ENCODE measurements at regions of chr7 and their contacts with region 1.

Region 1: GRCh38 chr7:43700059-43700501 is 29.2 kb downstream of the COA1 start:
- DNase-seq: peak; percentile 59
- H3K4me3 ChIP-seq: peak overlapping the region in 1 of 2 experiments; percentile 10; a peak in 1 of 4 replicates
- H3K27ac ChIP-seq: peak overlapping the region in 1 of 2 experiments; percentile 74; a peak in 2 of 4 replicates
- H3K4me1 ChIP-seq: peaks cover 12 to 40% of the 10 kb centered on the region in 2 experiments; a peak in 3 of 4 replicates
- H3K27me3 ChIP-seq: no peaks in the 10 kb centered on the region
- CTCF ChIP-seq: peak; percentile 94
- EP300 ChIP-seq: no peak
- RAD21 ChIP-seq: peak; percentile 98

Region 2: DNA sequence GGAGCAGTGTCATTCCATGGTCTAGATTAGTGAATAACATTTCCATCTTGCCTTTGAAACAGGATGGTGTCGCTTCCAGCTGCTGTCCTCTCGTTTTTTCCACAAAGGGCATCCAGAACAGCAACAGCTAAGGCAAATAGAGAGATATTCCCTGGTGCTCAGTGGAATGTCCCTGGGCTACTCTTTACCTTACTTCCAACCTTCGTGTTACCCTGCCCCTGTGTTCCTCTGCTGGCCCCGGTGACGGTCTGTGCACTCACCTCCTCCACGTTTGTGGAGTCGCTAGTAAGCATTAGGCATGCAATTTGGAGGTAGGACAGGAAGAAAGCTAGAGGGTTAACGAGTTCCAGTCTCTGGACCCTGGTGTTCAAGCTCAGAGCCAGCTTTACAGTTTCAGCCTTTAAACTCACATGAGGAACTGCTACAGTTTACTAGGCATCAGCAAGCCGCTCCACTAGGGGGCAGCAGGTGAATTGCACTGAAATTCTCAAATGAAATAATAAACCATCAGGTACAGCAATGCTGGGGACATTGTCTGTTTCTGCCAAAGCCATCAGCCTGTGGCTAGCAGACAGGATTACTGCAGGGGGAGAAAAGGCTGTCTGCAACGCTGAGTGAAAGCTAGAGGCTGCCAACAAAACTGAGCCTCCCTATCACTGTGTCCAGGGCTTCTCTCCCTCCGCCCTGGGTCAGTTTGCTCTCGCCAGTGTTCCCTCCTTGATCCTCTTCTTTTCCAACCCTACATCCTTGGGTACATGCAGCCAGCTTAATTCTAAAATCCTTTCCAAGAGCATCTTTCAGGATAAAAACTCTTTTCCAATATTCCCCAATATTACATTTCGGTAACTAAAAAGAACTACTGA is 758.9 kb before region 1 on chr7:
- CTCF ChIA-PET with region 1: interaction called, 19 read pairs
- POLR2A ChIA-PET with region 1: no interaction called
- DNase-seq: peak; percentile 62
- H3K4me3 ChIP-seq: no peak overlapping the region
- H3K27ac ChIP-seq: no peak overlapping the region
- H3K4me1 ChIP-seq: peaks cover 0 to 3% of the 10 kb centered on the region in 2 experiments; a peak in 1 of 4 replicates
- H3K27me3 ChIP-seq: no peaks in the 10 kb centered on the region
- CTCF ChIP-seq: peak; percentile 99
- EP300 ChIP-seq: no peak
- RAD21 ChIP-seq: peak; percentile 94

Region 3: GRCh38 chr7:43535810-43536585 is 164.1 kb before region 1 on chr7:
- CTCF ChIA-PET with region 1: interaction called, 11 read pairs
- POLR2A ChIA-PET with region 1: no interaction called
- DNase-seq: no peak
- H3K4me3 ChIP-seq: no peak overlapping the region
- H3K27ac ChIP-seq: peak overlapping the region in 1 of 2 experiments; percentile 18; a peak in 2 of 4 replicates
- H3K4me1 ChIP-seq: peaks cover 10 to 44% of the 10 kb centered on the region in 2 experiments; a peak in 3 of 4 replicates
- H3K27me3 ChIP-seq: peaks cover 26% of the 10 kb centered on the region
- CTCF ChIP-seq: no peak
- EP300 ChIP-seq: peak in 1 of 2 experiments; percentile 87; a peak in 2 of 4 replicates
- RAD21 ChIP-seq: no peak

Region 4: GRCh38 chr7:43602271-43602670 is 97.8 kb before region 1 on chr7:
- CTCF ChIA-PET with region 1: interaction called, 12 read pairs
- POLR2A ChIA-PET with region 1: no interaction called
- DNase-seq: no peak
- H3K4me3 ChIP-seq: no peak overlapping the region
- H3K27ac ChIP-seq: no peak overlapping the region
- H3K4me1 ChIP-seq: no peaks in the 10 kb centered on the region; a peak in 1 of 4 replicates
- H3K27me3 ChIP-seq: no peaks in the 10 kb centered on the region
- CTCF ChIP-seq: no peak
- EP300 ChIP-seq: no peak
- RAD21 ChIP-seq: no peak

Region 5: GRCh38 chr7:43666938-43667337 is 33.1 kb before region 1 on chr7:
- CTCF ChIA-PET with region 1: interaction called, 13 read pairs
- POLR2A ChIA-PET with region 1: no interaction called
- DNase-seq: no peak
- H3K4me3 ChIP-seq: no peak overlapping the region
- H3K27ac ChIP-seq: peak overlapping the region; percentile 67 to 86; a peak in 2 of 4 replicates
- H3K4me1 ChIP-seq: peaks cover 6 to 8% of the 10 kb centered on the region in 2 experiments; a peak in 3 of 4 replicates
- H3K27me3 ChIP-seq: no peaks in the 10 kb centered on the region
- CTCF ChIP-seq: no peak
- EP300 ChIP-seq: peak; percentile 63 to 72
- RAD21 ChIP-seq: no peak

Region 6: DNA sequence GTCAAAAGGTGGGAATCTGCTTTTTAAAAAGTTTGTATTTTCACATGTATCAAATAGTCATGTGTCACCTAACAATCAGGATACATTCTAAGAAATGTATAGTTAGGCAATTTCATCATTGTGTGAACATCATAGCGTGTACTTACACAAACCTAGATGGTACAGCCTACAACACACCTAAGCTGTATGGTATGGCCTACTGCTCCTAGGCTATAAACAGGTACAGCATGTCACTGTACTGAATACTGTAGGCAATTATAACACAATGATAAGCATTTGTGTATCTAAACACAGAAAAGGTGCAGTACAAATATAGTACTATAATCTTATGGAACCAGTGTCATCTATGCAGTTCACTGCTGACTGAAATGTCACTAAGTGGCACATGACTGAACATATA is 11.4 kb after region 1 on chr7:
- CTCF ChIA-PET with region 1: interaction called, 29 read pairs
- POLR2A ChIA-PET with region 1: no interaction called
- DNase-seq: no peak
- H3K4me3 ChIP-seq: no peak overlapping the region
- H3K27ac ChIP-seq: no peak overlapping the region
- H3K4me1 ChIP-seq: no peaks in the 10 kb centered on the region
- H3K27me3 ChIP-seq: no peaks in the 10 kb centered on the region
- CTCF ChIP-seq: no peak
- EP300 ChIP-seq: no peak
- RAD21 ChIP-seq: no peak

Region 7: GRCh38 chr7:44275957-44276410 is 575.9 kb after region 1 on chr7:
- CTCF ChIA-PET with region 1: no interaction called
- POLR2A ChIA-PET with region 1: no interaction called
- DNase-seq: peak; percentile 94
- H3K4me3 ChIP-seq: no peak overlapping the region; a peak in 1 of 4 replicates
- H3K27ac ChIP-seq: peak overlapping the region in 1 of 2 experiments; percentile 53; a peak in 1 of 4 replicates
- H3K4me1 ChIP-seq: peaks cover 4 to 38% of the 10 kb centered on the region in 2 experiments; a peak in 3 of 4 replicates
- H3K27me3 ChIP-seq: peaks cover 5% of the 10 kb centered on the region
- CTCF ChIP-seq: no peak
- EP300 ChIP-seq: no peak
- RAD21 ChIP-seq: no peak